ENCODE measurements at regions of chr9 and their contacts with region 1.

Region 1: GRCh38 chr9:71806901-71807307 is 38.6 kb upstream of the CEMIP2 start:
- DNase-seq: peak; percentile 79
- H3K4me3 Mint-ChIP-seq: no peak overlapping the region
- H3K27ac Mint-ChIP-seq: no peak overlapping the region
- H3K4me1 Mint-ChIP-seq: peaks cover 6% of the 10 kb centered on the region
- H3K27me3 Mint-ChIP-seq: no peaks in the 10 kb centered on the region
- CTCF ChIP-seq: peak; percentile 88

Region 2: DNA sequence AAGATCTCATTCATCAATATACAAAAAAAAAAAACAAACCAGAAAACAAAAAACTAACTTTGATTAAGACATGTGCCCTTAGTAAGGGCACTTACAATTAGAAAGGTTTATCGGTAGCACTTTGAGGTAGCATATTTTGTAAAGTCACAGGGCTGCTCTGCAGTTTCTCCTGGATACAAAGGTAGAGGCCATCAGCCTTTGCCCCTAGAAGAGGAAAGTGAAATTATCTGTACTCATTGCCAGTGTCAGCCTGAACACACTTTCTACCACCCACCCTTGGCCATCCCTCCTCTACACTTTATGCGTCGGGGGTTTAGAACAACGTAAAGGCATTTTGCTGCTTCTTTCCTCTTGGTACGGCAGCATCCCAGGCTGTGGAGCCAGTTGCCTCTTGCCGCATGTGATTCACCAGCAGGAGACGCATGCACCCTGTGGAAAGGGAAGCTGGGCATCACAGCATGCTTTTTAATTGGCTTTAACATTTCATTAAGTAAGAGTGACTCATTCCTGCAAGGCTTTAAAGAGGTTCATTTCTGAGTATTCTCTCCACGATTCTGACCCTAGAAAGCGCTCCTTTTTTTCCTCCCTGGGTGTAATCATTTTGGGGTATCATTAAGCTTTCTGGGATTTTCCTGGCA is 123.2 kb before region 1 on chr9:
- CTCF ChIA-PET with region 1: interaction called, 10 read pairs
- POLR2A ChIA-PET with region 1: no interaction called
- intact Hi-C with region 1: no loop called
- DNase-seq: peak; percentile 88
- H3K4me3 Mint-ChIP-seq: peak overlapping the region; percentile 15
- H3K27ac Mint-ChIP-seq: no peak overlapping the region
- H3K4me1 Mint-ChIP-seq: peaks cover 35% of the 10 kb centered on the region
- H3K27me3 Mint-ChIP-seq: no peaks in the 10 kb centered on the region
- CTCF ChIP-seq: peak; percentile 62

Region 3: GRCh38 chr9:71795097-71795813 is 11.6 kb before region 1 on chr9:
- CTCF ChIA-PET with region 1: interaction called, 20 read pairs
- POLR2A ChIA-PET with region 1: interaction called, 3 read pairs
- intact Hi-C with region 1: no loop called
- DNase-seq: no peak
- H3K4me3 Mint-ChIP-seq: no peak overlapping the region
- H3K27ac Mint-ChIP-seq: no peak overlapping the region
- H3K4me1 Mint-ChIP-seq: no peaks in the 10 kb centered on the region
- H3K27me3 Mint-ChIP-seq: no peaks in the 10 kb centered on the region
- CTCF ChIP-seq: no peak

Region 4: GRCh38 chr9:71911253-71912074 is 104.6 kb after region 1 on chr9 and contains the start of gene C9orf85:
- CTCF ChIA-PET with region 1: interaction called, 3 read pairs
- POLR2A ChIA-PET with region 1: interaction called, 3 read pairs
- intact Hi-C with region 1: loop called (anchors 5 kb)
- DNase-seq: peak; percentile 100
- H3K4me3 Mint-ChIP-seq: peak within 1 kb of the TSS; percentile 95
- H3K27ac Mint-ChIP-seq: peak within 1 kb of the TSS; percentile 88
- H3K4me1 Mint-ChIP-seq: peaks cover 23% of the 10 kb centered on the region
- H3K27me3 Mint-ChIP-seq: no peaks in the 10 kb centered on the region
- CTCF ChIP-seq: no peak
- total RNA-seq, gene C9orf85: 19.6 and 23.3 TPM in 2 replicates

Region 5: GRCh38 chr9:72022841-72023240 is 215.9 kb after region 1 on chr9:
- CTCF ChIA-PET with region 1: interaction called, 76 read pairs
- POLR2A ChIA-PET with region 1: no interaction called
- intact Hi-C with region 1: loop called (anchors 1 kb)
- DNase-seq: peak; percentile 41
- H3K4me3 Mint-ChIP-seq: no peak overlapping the region
- H3K27ac Mint-ChIP-seq: no peak overlapping the region
- H3K4me1 Mint-ChIP-seq: peaks cover 16% of the 10 kb centered on the region
- H3K27me3 Mint-ChIP-seq: no peaks in the 10 kb centered on the region
- CTCF ChIP-seq: no peak

Region 6: GRCh38 chr9:72827950-72828731 is 1021.2 kb after region 1 on chr9:
- CTCF ChIA-PET with region 1: no interaction called
- POLR2A ChIA-PET with region 1: no interaction called
- intact Hi-C with region 1: loop called (anchors 10 kb)
- DNase-seq: peak; percentile 78
- H3K4me3 Mint-ChIP-seq: no peak overlapping the region
- H3K27ac Mint-ChIP-seq: peak overlapping the region; percentile 72
- H3K4me1 Mint-ChIP-seq: peaks cover 14% of the 10 kb centered on the region
- H3K27me3 Mint-ChIP-seq: peaks cover 3% of the 10 kb centered on the region
- CTCF ChIP-seq: no peak